ENCODE measurements at regions of chr18 and their contacts with region 1.

Region 1: GRCh38 chr18:33983126-33983525 is 241.6 kb downstream of the NOL4 start:
- DNase-seq: no peak
- ATAC-seq: no peak

Region 2: DNA sequence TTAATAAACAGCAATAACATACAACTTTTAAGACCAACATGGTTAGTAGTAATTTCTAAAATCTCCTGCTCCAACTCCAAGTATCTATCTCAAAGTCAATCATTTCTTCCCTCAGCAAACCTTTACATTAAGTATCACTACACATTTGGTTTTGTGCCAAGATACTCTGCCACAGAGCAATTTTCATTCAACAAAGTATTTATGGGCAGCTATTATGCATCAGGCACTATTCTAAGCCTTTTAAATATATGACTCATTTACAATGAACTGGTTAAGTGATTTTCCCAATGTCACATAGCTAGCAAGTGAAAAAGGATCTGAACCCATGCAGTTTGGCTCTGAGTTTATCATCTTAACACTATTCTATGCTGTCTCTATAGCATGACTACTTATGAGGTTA is 22.7 kb before region 1 on chr18:
- intact Hi-C with region 1: loop called (anchors 2 kb)
- DNase-seq: no peak
- ATAC-seq: no peak

Region 3: GRCh38 chr18:34023471-34023870 is 40.3 kb after region 1 on chr18:
- intact Hi-C with region 1: no loop called
- DNase-seq: no peak
- ATAC-seq: no peak